ENCODE measurements at regions of chr5 and their contacts with region 1.

Region 1: DNA sequence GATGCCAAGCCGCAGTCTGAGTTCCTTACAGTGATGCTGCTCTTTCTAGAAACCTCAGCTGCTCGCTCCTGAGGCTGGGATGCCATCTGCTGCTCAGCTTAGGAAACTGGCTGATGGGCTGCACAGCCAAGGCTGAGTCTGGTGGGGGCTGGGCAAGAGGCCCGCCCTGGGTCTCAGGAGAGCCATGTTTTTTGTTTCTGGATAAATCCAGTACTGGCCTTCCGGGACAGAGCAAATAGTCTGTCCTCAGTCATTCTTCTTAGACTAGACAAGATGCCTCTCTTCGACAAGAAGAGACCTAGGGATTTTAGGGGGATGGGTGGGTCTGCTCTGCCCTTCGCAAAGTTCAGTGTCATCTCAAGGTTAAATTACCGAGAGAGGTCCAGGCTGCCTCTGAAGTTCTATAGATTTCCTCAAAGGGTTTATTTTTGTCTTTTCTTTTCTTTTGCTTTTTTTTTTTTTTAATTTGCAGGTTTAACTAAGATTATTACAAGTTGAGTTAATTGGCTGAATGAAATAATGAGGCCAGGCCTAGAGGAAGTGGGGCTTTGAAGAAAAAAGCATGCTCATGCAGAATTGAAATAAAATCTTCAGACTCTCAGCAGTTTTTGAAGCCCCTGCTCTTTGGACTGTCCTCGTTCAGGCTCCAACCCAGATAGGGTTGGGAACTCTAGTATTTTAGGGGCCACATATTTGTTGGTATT is 30.6 kb upstream of the MATR3 start:
- DNase-seq: peak; percentile 57
- H3K4me3 Mint-ChIP-seq: no peak overlapping the region
- H3K27ac Mint-ChIP-seq: no peak overlapping the region
- H3K4me1 Mint-ChIP-seq: peaks cover 11% of the 10 kb centered on the region
- H3K27me3 Mint-ChIP-seq: peaks cover 25% of the 10 kb centered on the region

Region 2: DNA sequence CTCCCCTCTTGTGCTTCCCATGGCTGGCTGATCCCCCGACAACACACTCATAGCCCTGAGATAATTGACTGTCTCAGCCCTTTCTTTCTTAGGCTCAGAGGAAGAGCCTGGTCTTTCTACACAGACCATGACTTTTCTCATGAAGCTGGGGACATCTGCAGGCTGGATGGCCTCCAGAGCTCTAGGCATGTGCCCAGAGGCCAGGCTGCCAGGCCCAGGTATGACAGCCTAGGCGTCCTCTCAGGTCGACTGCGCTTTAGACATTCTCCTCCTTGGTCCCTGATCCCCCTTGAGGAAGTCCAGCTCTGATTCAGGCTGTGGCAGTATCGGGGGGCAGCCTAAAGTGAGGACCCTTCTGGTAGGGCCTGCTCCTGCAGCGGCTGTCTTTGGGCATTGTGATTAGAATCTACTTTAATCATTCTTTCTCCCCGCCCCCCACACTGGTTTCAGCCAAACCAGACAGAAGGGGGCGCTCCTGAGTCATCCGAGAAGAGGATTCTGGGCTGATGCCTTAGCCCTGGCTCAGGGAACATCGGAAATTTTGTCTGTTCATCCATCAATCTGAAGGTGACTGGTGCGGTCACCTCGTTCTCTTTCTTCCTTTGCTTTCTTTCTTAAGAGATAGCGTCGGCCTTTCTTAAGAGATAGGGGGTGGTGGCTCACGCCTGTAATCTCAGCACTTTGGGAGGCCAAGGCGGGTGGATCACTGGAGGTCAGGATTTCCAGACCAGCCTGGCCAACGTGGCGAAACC is 621.2 kb before region 1 on chr5:
- intact Hi-C with region 1: loop called (anchors 2 kb)
- DNase-seq: peak; percentile 61
- H3K4me3 Mint-ChIP-seq: no peak overlapping the region
- H3K27ac Mint-ChIP-seq: no peak overlapping the region
- H3K4me1 Mint-ChIP-seq: no peaks in the 10 kb centered on the region
- H3K27me3 Mint-ChIP-seq: peaks cover 69% of the 10 kb centered on the region

Region 3: DNA sequence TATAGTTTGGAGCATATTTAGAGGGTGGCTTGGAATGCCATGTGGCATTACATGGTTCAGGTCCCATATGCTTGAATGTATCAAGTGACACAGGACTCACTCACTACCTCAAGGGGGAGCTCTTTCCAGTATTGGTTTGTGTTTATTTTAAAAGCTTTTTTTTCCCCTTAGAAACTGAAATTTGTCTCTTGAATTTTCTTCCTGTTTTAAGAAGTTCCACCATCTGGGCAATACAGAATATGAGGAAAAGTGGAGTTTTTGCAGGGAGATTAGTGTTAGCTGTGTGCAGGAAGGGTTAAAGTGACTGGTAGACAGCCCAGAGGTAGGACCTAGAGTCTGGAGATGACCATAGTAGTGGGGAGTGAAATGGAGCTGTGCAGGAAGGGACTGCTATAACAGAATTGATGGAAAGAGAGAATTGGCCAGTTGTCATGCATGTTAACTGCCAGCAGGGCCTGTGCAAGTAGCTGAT is 473.1 kb before region 1 on chr5:
- intact Hi-C with region 1: loop called (anchors 5 kb)
- DNase-seq: no peak
- H3K4me3 Mint-ChIP-seq: no peak overlapping the region
- H3K27ac Mint-ChIP-seq: peak overlapping the region; percentile 24
- H3K4me1 Mint-ChIP-seq: peaks cover 31% of the 10 kb centered on the region
- H3K27me3 Mint-ChIP-seq: peaks cover 1% of the 10 kb centered on the region

Region 4: DNA sequence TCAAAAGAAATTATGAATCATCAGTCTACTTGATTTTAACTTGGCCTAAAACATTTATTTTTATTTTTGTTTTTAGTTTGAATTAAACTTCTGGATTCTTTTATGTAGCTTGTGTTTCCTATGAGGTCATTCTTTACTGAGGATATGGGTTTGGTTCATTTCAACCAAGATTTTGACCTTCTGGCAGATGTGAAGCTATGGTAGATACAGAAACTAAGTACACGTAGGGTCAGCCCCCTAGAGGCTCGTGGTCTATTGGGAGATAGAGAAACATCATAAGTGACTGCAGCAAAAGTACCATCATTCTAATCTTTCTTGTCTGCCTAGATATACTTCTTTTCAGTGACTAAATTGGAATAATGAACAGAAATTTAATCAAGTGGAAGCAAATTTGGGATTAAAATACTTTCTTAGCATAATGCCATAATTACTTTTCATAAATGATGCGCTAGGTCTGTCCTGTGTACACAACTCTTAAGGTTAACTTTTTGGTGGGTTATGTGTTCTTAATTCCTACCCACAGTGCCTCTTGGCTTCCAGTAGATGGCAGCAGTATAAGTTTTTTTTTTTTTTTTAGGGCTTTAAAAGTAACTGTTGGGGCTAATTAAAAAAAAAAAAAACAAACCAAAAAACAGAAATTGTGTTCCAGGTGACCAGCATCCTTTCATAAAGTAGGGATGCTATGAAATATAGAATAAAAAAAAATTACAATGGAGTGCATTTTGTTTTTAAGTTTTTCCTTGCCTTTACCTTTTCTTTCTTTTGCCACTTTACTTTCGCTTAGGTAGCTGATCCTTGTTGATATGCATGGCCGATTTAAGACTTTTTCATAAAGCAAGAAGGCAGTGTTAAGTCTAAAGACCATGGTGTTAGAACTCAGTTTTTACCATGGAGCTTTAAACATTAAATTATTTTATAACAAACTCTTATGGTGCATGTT is 437.7 kb before region 1 on chr5:
- intact Hi-C with region 1: loop called (anchors 10 kb)
- DNase-seq: no peak
- H3K4me3 Mint-ChIP-seq: no peak overlapping the region
- H3K27ac Mint-ChIP-seq: peak overlapping the region; percentile 91
- H3K4me1 Mint-ChIP-seq: peaks cover 30% of the 10 kb centered on the region
- H3K27me3 Mint-ChIP-seq: no peaks in the 10 kb centered on the region

Region 5: DNA sequence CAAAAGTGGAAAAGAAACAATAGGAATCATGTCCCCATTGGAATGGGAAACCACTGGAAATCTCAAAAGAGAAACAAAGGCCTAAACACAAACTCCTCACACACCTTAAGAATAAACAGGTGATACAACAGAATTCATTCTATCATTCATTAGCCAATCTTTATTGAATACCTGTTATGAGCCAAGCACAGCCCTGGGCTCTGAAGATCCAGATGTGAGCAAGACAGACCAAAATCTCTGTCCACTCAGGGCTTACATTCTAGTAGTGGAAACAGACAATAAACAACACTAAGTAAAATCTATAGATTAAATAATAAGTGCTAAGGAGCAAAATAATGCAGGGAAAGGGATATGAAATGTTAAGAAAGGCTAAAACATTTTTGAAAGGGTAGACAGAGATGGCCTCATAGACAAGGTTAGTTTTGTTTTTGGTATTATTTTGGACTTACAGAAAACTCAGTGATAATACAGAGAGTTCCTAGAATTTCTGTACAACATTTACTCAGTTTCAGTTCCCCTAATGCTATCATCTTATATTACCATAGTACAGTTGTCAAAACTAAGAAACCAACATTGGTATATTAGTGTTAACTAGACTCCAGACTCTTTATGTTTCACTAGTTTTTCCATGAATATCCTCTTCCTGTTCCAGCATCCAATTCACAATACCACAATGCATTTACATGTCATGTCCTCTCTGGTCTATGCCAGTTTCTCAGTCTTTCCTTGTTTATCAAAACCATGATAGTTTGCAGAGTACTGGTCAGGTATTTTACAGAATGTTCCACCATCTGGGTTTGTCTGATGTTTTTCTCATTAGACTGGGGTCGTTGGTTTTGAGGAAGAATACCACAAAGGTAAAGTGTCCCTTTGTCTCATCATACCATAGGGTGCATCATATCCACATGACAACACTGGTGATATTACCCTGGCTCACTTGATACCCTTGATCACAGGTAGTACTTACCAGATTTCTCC is 168.5 kb before region 1 on chr5:
- intact Hi-C with region 1: no loop called
- DNase-seq: no peak
- H3K4me3 Mint-ChIP-seq: no peak overlapping the region
- H3K27ac Mint-ChIP-seq: peak overlapping the region; percentile 31
- H3K4me1 Mint-ChIP-seq: peaks cover 13% of the 10 kb centered on the region
- H3K27me3 Mint-ChIP-seq: no peaks in the 10 kb centered on the region

Region 6: DNA sequence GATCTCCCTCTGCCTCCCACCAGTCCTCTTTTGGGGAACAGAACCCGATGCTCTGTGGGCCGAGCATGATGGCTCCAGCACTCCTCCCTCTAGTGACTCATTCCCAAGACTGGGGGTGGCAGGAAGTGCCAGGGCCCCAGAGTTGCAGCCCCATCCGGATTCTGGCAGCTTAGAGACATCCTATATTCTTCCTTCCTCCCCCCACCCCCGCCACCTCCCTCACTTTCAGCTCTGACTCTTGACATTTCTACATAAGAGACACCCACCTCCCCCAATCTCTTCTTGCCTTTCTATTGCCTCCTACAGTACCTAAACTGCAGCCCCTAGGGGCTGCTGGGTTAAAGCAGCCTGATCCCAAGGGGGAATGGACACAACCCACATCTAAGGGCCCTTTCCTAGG is 16.5 kb before region 1 on chr5:
- intact Hi-C with region 1: loop called (anchors 1 kb)
- DNase-seq: peak; percentile 13
- H3K4me3 Mint-ChIP-seq: peak overlapping the region; percentile 17
- H3K27ac Mint-ChIP-seq: peak overlapping the region; percentile 73
- H3K4me1 Mint-ChIP-seq: peaks cover 22% of the 10 kb centered on the region
- H3K27me3 Mint-ChIP-seq: peaks cover 4% of the 10 kb centered on the region

Region 7: GRCh38 chr5:139282197-139282557 is 19.3 kb after region 1 on chr5:
- intact Hi-C with region 1: no loop called
- DNase-seq: no peak
- H3K4me3 Mint-ChIP-seq: no peak overlapping the region
- H3K27ac Mint-ChIP-seq: no peak overlapping the region
- H3K4me1 Mint-ChIP-seq: peaks cover 23% of the 10 kb centered on the region
- H3K27me3 Mint-ChIP-seq: no peaks in the 10 kb centered on the region

Measured in activated T-helper 2 cell treated with anti-CD3 and anti-CD28 coated beads, Interferon-gamma antibody, Interleukin-2, Interleukin-4, amounts not matched to agents 10 μg/mL and 5 μg/mL and 100 μg/mL, durations not matched to agents 14 hours and 24 hours and 36 hours (primary cell).